Common myeloid progenitor, CD34-positive (primary cell): ENCODE measurements at regions of chr20 and their contacts with region 1.

Region 1: DNA sequence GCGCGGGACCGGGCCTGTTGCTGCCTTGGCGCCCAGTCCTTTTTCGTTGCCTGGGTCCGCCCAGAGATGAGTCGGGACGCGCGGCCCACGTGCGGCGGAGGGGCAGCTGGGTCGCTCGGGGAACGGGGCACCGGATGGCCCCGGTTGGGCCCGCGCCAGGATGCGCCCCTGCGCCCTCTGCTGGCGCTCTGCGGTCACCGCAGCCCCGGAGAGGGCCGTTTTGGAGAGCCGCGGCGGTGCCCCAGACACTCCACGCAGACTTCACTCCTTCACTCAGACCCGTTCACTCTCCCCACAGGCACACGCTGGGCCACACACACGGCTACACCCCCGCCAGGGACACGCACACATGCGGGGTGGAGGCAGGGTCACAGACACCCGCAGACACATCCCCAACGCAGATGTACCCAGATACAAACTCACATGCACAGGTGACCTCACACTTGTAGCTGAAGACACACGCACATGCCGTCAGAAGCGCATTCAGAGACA is 38.8 kb downstream of the SRC start:
- DNase-seq: peak; percentile 58 to 74 (median 72)
- H3K4me3 ChIP-seq: peak overlapping the region in 4 of 7 experiments; percentile 34 to 66 (median 58)
- H3K27ac ChIP-seq: no peak overlapping the region
- H3K4me1 ChIP-seq: peaks cover 0 to 29% (median 20%) of the 10 kb centered on the region in 4 experiments
- H3K27me3 ChIP-seq: no peaks in the 10 kb centered on the region

Region 2: DNA sequence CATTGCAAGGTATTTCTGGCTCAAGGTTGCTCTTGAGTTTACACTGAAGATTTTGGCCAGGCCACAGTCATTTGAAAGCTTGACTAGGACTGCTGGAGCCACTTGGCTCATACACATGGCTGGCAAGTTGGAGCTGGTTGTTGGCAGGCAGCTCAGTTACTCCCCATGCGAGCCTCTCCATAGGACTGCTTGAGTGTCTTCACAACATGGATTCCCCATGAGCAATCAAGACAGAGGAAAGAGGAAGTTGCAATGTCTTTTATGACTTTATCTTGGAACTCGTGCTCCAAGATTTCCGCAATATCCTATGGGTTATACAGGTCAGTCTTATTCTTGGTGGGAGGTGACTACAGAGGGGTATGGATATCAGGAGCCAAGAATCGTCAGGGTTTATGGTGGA is 96.6 kb before region 1 on chr20:
- CTCF ChIA-PET with region 1: interaction called, 11 read pairs
- POLR2A ChIA-PET with region 1: interaction called, 4 read pairs
- DNase-seq: peak in 1 of 3 donors; percentile 31
- H3K4me3 ChIP-seq: no peak overlapping the region
- H3K27ac ChIP-seq: no peak overlapping the region
- H3K4me1 ChIP-seq: peaks cover 0 to 24% (median 15%) of the 10 kb centered on the region in 4 experiments
- H3K27me3 ChIP-seq: no peaks in the 10 kb centered on the region

Region 3: GRCh38 chr20:37463726-37464494 is 79.2 kb after region 1 on chr20:
- CTCF ChIA-PET with region 1: no interaction called
- POLR2A ChIA-PET with region 1: no interaction called
- DNase-seq: no peak
- H3K4me3 ChIP-seq: no peak overlapping the region
- H3K27ac ChIP-seq: no peak overlapping the region
- H3K4me1 ChIP-seq: no peaks in the 10 kb centered on the region
- H3K27me3 ChIP-seq: peaks cover 0 to 5% (median 0%) of the 10 kb centered on the region in 5 experiments

Region 4: DNA sequence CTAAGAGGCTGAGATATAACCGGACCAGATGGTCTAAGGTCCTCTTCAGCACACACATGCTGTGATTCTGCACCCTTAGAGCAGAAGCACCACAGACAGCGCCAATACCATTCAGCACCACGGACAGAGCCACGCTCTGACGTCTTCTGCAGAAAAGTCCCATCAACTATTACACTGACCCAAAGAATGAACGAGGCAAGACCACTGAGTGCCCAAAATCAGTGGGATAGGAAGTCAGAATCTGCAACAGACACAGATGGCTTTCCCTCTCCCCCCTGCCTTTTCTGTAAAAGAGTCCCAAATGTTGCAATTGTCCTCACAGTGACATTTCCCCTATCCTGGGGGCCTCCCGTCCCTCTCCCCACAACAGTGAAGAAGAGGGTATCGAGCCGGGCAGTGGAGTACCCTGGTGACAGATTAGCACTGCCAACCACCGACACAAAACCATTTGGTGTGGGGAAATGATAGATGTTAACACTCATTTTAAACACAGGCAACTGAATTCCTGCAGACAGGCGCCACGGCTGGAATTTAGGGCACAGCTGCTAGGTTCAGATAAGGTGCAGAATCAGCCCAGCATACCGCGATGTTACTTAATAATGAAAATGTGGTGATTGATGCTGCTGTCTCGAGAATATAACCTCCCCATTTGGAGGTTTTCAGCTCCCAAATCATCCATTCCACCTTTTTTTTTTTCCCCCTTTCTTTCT is 242.5 kb after region 1 on chr20:
- CTCF ChIA-PET with region 1: no interaction called
- POLR2A ChIA-PET with region 1: no interaction called
- DNase-seq: peak; percentile 57 to 82 (median 77)
- H3K4me3 ChIP-seq: no peak overlapping the region
- H3K27ac ChIP-seq: no peak overlapping the region
- H3K4me1 ChIP-seq: no peaks in the 10 kb centered on the region
- H3K27me3 ChIP-seq: peaks cover 0 to 66% (median 14%) of the 10 kb centered on the region in 5 experiments